ENCODE measurements at regions of chr4 and their contacts with region 1.

Region 1: GRCh38 chr4:25312496-25313200 is at the start of gene ZCCHC4:
- DNase-seq: peak; percentile 97
- ATAC-seq: peak; percentile 100
- H3K4me3 ChIP-seq: peak within 1 kb of the TSS; percentile 68 to 85 (median 83)
- H3K4me3 Mint-ChIP-seq: peak within 1 kb of the TSS; percentile 98
- H3K27ac ChIP-seq: peak within 1 kb of the TSS; percentile 66 to 82
- H3K27ac Mint-ChIP-seq: peak within 1 kb of the TSS; percentile 97
- H3K4me1 ChIP-seq: peaks cover 27 to 29% of the 10 kb centered on the region in 2 donors
- H3K4me1 Mint-ChIP-seq: peaks cover 45% of the 10 kb centered on the region
- H3K27me3 ChIP-seq: no peaks in the 10 kb centered on the region
- H3K27me3 Mint-ChIP-seq: no peaks in the 10 kb centered on the region
- CTCF ChIP-seq: peak; percentile 99
- total RNA-seq, gene ZCCHC4: 19.5 and 22.4 TPM in 2 replicates

Region 2: GRCh38 chr4:24584175-24584850 is 728.3 kb before region 1 on chr4 and contains the start of gene DHX15:
- CTCF ChIA-PET with region 1: no interaction called
- POLR2A ChIA-PET with region 1: no interaction called
- intact Hi-C with region 1: loop called (anchors 2 kb)
- DNase-seq: peak; percentile 96
- ATAC-seq: peak; percentile 94
- H3K4me3 ChIP-seq: peak within 1 kb of the TSS; percentile 78 to 100 (median 99)
- H3K4me3 Mint-ChIP-seq: peak within 1 kb of the TSS; percentile 94
- H3K27ac ChIP-seq: peak within 1 kb of the TSS; percentile 96 to 98
- H3K27ac Mint-ChIP-seq: peak within 1 kb of the TSS; percentile 97
- H3K4me1 ChIP-seq: peaks cover 17 to 19% of the 10 kb centered on the region in 2 donors
- H3K4me1 Mint-ChIP-seq: peaks cover 39% of the 10 kb centered on the region
- H3K27me3 ChIP-seq: no peaks in the 10 kb centered on the region
- H3K27me3 Mint-ChIP-seq: no peaks in the 10 kb centered on the region
- CTCF ChIP-seq: no peak
- total RNA-seq, gene DHX15: 154 and 162 TPM in 2 replicates

Region 3: DNA sequence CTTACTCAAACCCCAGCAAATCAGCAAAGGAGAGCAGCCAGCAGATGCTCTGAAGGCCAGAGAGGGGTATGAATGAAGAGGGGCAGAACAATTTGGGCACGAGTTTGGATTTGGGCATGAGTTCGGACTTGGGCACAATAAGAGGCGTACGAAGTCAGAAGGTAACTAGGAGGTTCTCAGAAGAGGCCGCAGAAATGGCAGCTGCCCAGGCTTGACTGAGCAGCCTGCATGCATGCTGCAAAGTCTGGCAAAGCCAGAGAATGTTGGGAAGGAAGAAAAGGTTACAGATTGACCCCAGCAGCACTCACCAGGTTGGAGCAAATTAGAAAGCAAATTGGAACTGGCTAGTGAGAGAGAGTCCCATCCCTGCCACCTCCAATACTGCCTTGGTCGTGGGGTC is 415.0 kb before region 1 on chr4:
- CTCF ChIA-PET with region 1: no interaction called
- POLR2A ChIA-PET with region 1: no interaction called
- intact Hi-C with region 1: no loop called
- DNase-seq: no peak
- ATAC-seq: no peak
- H3K4me3 ChIP-seq: no peak overlapping the region
- H3K4me3 Mint-ChIP-seq: no peak overlapping the region
- H3K27ac ChIP-seq: no peak overlapping the region
- H3K27ac Mint-ChIP-seq: no peak overlapping the region
- H3K4me1 ChIP-seq: no peaks in the 10 kb centered on the region
- H3K4me1 Mint-ChIP-seq: no peaks in the 10 kb centered on the region
- H3K27me3 ChIP-seq: no peaks in the 10 kb centered on the region
- H3K27me3 Mint-ChIP-seq: no peaks in the 10 kb centered on the region
- CTCF ChIP-seq: no peak

Region 4: GRCh38 chr4:25234390-25235370 is 78.0 kb before region 1 on chr4:
- CTCF ChIA-PET with region 1: interaction called, 49 read pairs
- POLR2A ChIA-PET with region 1: interaction called, 9 read pairs
- intact Hi-C with region 1: loop called (anchors 1 kb)
- DNase-seq: peak; percentile 85
- ATAC-seq: peak; percentile 50
- H3K4me3 ChIP-seq: peak overlapping the region; percentile 72 to 91 (median 79)
- H3K4me3 Mint-ChIP-seq: peak overlapping the region; percentile 85
- H3K27ac ChIP-seq: peak overlapping the region; percentile 84 to 85
- H3K27ac Mint-ChIP-seq: peak overlapping the region; percentile 82
- H3K4me1 ChIP-seq: peaks cover 25 to 29% of the 10 kb centered on the region in 2 donors
- H3K4me1 Mint-ChIP-seq: peaks cover 39% of the 10 kb centered on the region
- H3K27me3 ChIP-seq: no peaks in the 10 kb centered on the region
- H3K27me3 Mint-ChIP-seq: no peaks in the 10 kb centered on the region
- CTCF ChIP-seq: peak; percentile 59

Region 5: GRCh38 chr4:25367004-25367621 is 54.5 kb after region 1 on chr4:
- CTCF ChIA-PET with region 1: interaction called, 20 read pairs
- POLR2A ChIA-PET with region 1: no interaction called
- intact Hi-C with region 1: no loop called
- DNase-seq: peak; percentile 51
- ATAC-seq: no peak
- H3K4me3 ChIP-seq: no peak overlapping the region
- H3K4me3 Mint-ChIP-seq: no peak overlapping the region
- H3K27ac ChIP-seq: no peak overlapping the region
- H3K27ac Mint-ChIP-seq: no peak overlapping the region
- H3K4me1 ChIP-seq: no peaks in the 10 kb centered on the region
- H3K4me1 Mint-ChIP-seq: no peaks in the 10 kb centered on the region
- H3K27me3 ChIP-seq: no peaks in the 10 kb centered on the region
- H3K27me3 Mint-ChIP-seq: no peaks in the 10 kb centered on the region
- CTCF ChIP-seq: peak; percentile 78

Region 6: GRCh38 chr4:25913851-25914669 is 601.4 kb after region 1 on chr4 and contains the start of gene SMIM20:
- CTCF ChIA-PET with region 1: no interaction called
- POLR2A ChIA-PET with region 1: interaction called, 4 read pairs
- intact Hi-C with region 1: loop called (anchors 10 kb)
- DNase-seq: peak; percentile 95
- ATAC-seq: peak; percentile 94
- H3K4me3 ChIP-seq: peak within 1 kb of the TSS; percentile 89 to 95 (median 93)
- H3K4me3 Mint-ChIP-seq: peak within 1 kb of the TSS; percentile 95
- H3K27ac ChIP-seq: peak within 1 kb of the TSS; percentile 92 to 93
- H3K27ac Mint-ChIP-seq: peak within 1 kb of the TSS; percentile 97
- H3K4me1 ChIP-seq: peaks cover 27 to 35% of the 10 kb centered on the region in 2 donors
- H3K4me1 Mint-ChIP-seq: peaks cover 34% of the 10 kb centered on the region
- H3K27me3 ChIP-seq: no peaks in the 10 kb centered on the region
- H3K27me3 Mint-ChIP-seq: no peaks in the 10 kb centered on the region
- CTCF ChIP-seq: no peak
- total RNA-seq, gene SMIM20: 14.3 and 20.2 TPM in 2 replicates

Region 7: GRCh38 chr4:26583865-26584652 is 1271.4 kb after region 1 on chr4 and contains the start of gene TBC1D19:
- CTCF ChIA-PET with region 1: interaction called, 5 read pairs
- POLR2A ChIA-PET with region 1: no interaction called
- intact Hi-C with region 1: loop called (anchors 5 kb)
- DNase-seq: peak; percentile 90
- ATAC-seq: peak; percentile 95
- H3K4me3 ChIP-seq: peak within 1 kb of the TSS; percentile 43 to 92 (median 82)
- H3K4me3 Mint-ChIP-seq: peak within 1 kb of the TSS; percentile 88
- H3K27ac ChIP-seq: peak within 1 kb of the TSS; percentile 85 to 87
- H3K27ac Mint-ChIP-seq: peak within 1 kb of the TSS; percentile 91
- H3K4me1 ChIP-seq: peaks cover 11 to 13% of the 10 kb centered on the region in 2 donors
- H3K4me1 Mint-ChIP-seq: peaks cover 26% of the 10 kb centered on the region
- H3K27me3 ChIP-seq: no peaks in the 10 kb centered on the region
- H3K27me3 Mint-ChIP-seq: peaks cover 7% of the 10 kb centered on the region
- CTCF ChIP-seq: no peak
- total RNA-seq, gene TBC1D19: 10.0 and 11.0 TPM in 2 replicates

Measured in B cell (primary cell).